ENCODE measurements at regions of chr19 and their contacts with region 1.

Region 1: DNA sequence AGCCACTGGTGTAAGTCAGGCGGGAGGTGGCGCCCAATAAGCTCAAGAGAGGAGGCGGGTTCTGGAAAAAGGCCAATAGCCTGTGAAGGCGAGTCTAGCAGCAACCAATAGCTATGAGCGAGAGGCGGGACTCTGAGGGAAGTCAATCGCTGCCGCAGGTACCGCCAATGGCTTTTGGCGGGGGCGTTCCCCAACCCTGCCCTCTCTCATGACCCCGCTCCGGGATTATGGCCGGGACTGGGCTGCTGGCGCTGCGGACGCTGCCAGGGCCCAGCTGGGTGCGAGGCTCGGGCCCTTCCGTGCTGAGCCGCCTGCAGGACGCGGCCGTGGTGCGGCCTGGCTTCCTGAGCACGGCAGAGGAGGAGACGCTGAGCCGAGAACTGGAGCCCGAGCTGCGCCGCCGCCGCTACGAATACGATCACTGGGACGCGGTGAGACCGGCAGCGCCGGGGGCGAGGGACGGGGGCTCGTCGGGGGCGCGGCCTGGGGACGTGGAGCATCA is at the start of gene ALKBH7:
- DNase-seq: peak; percentile 98
- ATAC-seq: peak; percentile 84
- H3K4me3 Mint-ChIP-seq: peak within 1 kb of the TSS; percentile 80
- H3K27ac Mint-ChIP-seq: peak within 1 kb of the TSS; percentile 92
- H3K4me1 Mint-ChIP-seq: peaks cover 11% of the 10 kb centered on the region
- H3K27me3 Mint-ChIP-seq: no peaks in the 10 kb centered on the region
- total RNA-seq, gene ALKBH7: 22.8 to 44.7 TPM

Region 2: GRCh38 chr19:5977785-5978605 is 394.6 kb before region 1 on chr19 and contains the start of gene RANBP3:
- CTCF ChIA-PET with region 1: no interaction called
- POLR2A ChIA-PET with region 1: no interaction called
- intact Hi-C with region 1: loop called in 1 of 2 experiments (anchors 1 kb)
- DNase-seq: peak; percentile 99
- ATAC-seq: peak; percentile 92
- H3K4me3 Mint-ChIP-seq: peak within 1 kb of the TSS; percentile 94
- H3K27ac Mint-ChIP-seq: peak within 1 kb of the TSS; percentile 90
- H3K4me1 Mint-ChIP-seq: peaks cover 56% of the 10 kb centered on the region
- H3K27me3 Mint-ChIP-seq: no peaks in the 10 kb centered on the region
- total RNA-seq, gene RANBP3: 85.5 to 103 TPM

Region 3: GRCh38 chr19:6133231-6133630 is 239.4 kb before region 1 on chr19:
- CTCF ChIA-PET with region 1: no interaction called
- POLR2A ChIA-PET with region 1: no interaction called
- intact Hi-C with region 1: no loop called
- DNase-seq: no peak
- ATAC-seq: no peak
- H3K4me3 Mint-ChIP-seq: no peak overlapping the region
- H3K27ac Mint-ChIP-seq: no peak overlapping the region
- H3K4me1 Mint-ChIP-seq: no peaks in the 10 kb centered on the region
- H3K27me3 Mint-ChIP-seq: no peaks in the 10 kb centered on the region

Region 4: DNA sequence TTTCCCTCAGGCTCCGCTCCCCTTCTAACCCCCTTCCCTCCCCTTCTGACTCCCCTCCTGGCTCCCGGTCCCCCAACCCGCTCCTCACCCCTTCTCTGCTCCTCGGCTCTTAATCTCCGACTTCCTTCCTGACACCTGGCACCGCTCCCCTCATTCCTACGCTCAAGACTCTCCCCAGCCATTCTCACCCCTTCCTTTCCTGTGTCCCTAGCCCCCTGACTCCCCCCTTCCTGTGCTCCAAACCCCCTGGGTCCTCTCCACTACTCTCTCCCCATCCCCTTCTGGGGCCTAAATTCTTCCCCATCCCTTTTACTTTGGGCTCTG is 10.7 kb before region 1 on chr19:
- CTCF ChIA-PET with region 1: interaction called, 8 read pairs
- POLR2A ChIA-PET with region 1: interaction called, 46 read pairs
- intact Hi-C with region 1: loop called (anchors 1 kb)
- DNase-seq: no peak
- ATAC-seq: peak; percentile 1
- H3K4me3 Mint-ChIP-seq: peak overlapping the region; percentile 85
- H3K27ac Mint-ChIP-seq: peak overlapping the region; percentile 91
- H3K4me1 Mint-ChIP-seq: peaks cover 16% of the 10 kb centered on the region
- H3K27me3 Mint-ChIP-seq: no peaks in the 10 kb centered on the region

Region 5: DNA sequence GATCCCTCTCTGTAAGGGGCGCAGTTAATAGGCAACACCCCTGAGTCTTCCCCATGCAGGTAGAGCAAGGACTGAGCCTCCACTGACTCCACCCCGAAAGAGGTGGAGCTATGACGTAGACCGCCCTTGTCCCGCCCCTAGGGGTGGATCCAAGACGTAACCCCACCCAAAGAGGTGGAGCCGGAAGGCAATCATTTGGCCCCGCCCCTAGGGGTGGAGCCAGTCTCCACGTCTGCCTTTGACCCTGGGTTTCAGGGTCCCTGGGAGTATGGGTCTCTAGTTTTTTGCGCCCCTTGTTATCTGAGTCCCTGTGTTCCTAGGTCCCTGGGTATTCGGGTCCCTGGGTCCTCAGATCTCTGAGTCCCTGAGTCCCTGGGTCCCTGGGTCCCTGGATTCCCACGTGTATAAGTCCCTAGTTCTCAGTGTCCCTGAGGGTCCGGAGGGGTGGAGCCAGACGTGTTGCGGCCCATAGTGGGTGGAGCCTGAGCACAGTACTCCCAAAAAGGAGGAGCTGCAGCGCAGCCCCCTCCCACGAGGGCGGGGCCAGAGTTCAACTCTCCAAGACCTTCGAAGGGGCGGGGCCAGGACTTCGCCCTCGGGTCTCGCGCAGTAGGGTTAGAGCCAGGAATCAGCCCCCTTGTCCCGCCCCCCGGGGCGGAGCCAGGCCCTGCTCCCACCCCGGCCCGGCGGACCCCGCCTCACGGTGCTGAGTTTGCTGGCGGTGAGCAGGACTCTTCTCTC is 103.7 kb after region 1 on chr19:
- CTCF ChIA-PET with region 1: no interaction called
- POLR2A ChIA-PET with region 1: no interaction called
- intact Hi-C with region 1: loop called in 1 of 2 experiments (anchors 1 kb)
- DNase-seq: peak; percentile 84
- ATAC-seq: peak; percentile 88
- H3K4me3 Mint-ChIP-seq: no peak overlapping the region
- H3K27ac Mint-ChIP-seq: no peak overlapping the region
- H3K4me1 Mint-ChIP-seq: peaks cover 16% of the 10 kb centered on the region
- H3K27me3 Mint-ChIP-seq: no peaks in the 10 kb centered on the region

Region 6: GRCh38 chr19:6801485-6802086 is 428.9 kb after region 1 on chr19:
- CTCF ChIA-PET with region 1: no interaction called
- POLR2A ChIA-PET with region 1: no interaction called
- intact Hi-C with region 1: loop called in 1 of 2 experiments (anchors 1 kb)
- DNase-seq: peak; percentile 90
- ATAC-seq: peak; percentile 75
- H3K4me3 Mint-ChIP-seq: peak overlapping the region; percentile 82
- H3K27ac Mint-ChIP-seq: peak overlapping the region; percentile 98
- H3K4me1 Mint-ChIP-seq: peaks cover 72% of the 10 kb centered on the region
- H3K27me3 Mint-ChIP-seq: no peaks in the 10 kb centered on the region